ENCODE measurements at regions of chr21 and their contacts with region 1.

Region 1: GRCh38 chr21:36727866-36728265 is 29.0 kb downstream of the SIM2 start:
- DNase-seq: peak in 3 of 42 donors; percentile 3 to 27 (median 3)

Region 2: GRCh38 chr21:36504067-36505058 is 223.5 kb before region 1 on chr21:
- intact Hi-C with region 1: loop called (anchors 10 kb)
- DNase-seq: peak in 33 of 42 donors; percentile 8 to 86 (median 56)